ENCODE measurements at regions of chr10 and their contacts with region 1.

Region 1: GRCh38 chr10:73879296-73880173 is 5.2 kb upstream of the CAMK2G start:
- DNase-seq: peak; percentile 75 to 89
- ATAC-seq: peak; percentile 87 to 93
- H3K4me3 ChIP-seq: no peak overlapping the region
- H3K27ac ChIP-seq: peak overlapping the region in 1 of 2 experiments; percentile 65; a peak in 3 of 6 replicates
- H3K4me1 ChIP-seq: peaks cover 27% of the 10 kb centered on the region
- CTCF ChIP-seq: peak; percentile 88
- EP300 ChIP-seq: no peak
- POLR2A ChIP-seq: no peak
- RAD21 ChIP-seq: peak; percentile 80

Region 2: DNA sequence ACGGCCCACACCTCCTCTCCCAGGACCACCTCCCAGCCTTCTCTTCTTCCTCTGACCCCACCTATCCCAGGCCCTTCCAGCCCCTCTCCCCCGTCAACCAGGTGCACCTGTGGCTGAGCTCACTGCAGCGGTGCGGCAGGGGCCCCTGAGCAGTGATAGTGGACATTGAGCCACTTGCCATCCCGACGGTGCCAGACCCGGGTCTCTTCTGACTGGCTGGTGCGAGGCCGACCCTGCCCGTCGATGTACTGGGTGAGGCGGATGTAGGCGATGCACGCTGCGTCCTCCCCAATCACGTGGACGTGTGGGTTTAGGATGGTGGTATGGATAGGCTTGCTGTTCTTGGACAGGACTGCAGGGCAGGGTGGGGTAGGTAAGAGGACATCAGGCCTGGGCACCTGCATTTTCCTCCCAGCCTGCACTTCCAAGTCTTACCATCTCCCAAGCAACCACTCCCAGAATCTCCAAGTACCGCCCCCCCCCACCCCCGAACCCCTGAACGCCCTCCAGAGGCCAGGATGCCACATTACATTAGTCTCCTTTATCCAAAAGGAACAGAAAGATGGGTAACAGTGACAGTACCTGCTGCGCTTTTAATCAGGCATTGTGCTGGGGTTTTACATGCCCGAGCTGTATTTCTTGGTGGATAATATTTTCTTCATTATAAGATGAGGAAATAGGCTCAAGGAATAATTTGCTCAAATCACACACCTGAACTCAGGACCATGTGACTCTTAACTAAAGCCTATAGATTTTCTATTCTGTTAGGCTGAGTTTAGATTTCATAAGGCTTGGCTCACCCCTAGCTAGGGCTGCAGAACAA is 64.4 kb before region 1 on chr10:
- CTCF ChIA-PET with region 1: interaction called, 13 read pairs
- POLR2A ChIA-PET with region 1: no interaction called
- DNase-seq: peak; percentile 62 to 79
- ATAC-seq: no peak; a peak in 1 of 6 replicates
- H3K4me3 ChIP-seq: no peak overlapping the region
- H3K27ac ChIP-seq: no peak overlapping the region
- H3K4me1 ChIP-seq: peaks cover 5% of the 10 kb centered on the region; the same call in 2 of the 3 replicates
- CTCF ChIP-seq: peak; percentile 23; the same call in 1 of the 3 replicates
- EP300 ChIP-seq: no peak
- POLR2A ChIP-seq: no peak
- RAD21 ChIP-seq: no peak

Region 3: DNA sequence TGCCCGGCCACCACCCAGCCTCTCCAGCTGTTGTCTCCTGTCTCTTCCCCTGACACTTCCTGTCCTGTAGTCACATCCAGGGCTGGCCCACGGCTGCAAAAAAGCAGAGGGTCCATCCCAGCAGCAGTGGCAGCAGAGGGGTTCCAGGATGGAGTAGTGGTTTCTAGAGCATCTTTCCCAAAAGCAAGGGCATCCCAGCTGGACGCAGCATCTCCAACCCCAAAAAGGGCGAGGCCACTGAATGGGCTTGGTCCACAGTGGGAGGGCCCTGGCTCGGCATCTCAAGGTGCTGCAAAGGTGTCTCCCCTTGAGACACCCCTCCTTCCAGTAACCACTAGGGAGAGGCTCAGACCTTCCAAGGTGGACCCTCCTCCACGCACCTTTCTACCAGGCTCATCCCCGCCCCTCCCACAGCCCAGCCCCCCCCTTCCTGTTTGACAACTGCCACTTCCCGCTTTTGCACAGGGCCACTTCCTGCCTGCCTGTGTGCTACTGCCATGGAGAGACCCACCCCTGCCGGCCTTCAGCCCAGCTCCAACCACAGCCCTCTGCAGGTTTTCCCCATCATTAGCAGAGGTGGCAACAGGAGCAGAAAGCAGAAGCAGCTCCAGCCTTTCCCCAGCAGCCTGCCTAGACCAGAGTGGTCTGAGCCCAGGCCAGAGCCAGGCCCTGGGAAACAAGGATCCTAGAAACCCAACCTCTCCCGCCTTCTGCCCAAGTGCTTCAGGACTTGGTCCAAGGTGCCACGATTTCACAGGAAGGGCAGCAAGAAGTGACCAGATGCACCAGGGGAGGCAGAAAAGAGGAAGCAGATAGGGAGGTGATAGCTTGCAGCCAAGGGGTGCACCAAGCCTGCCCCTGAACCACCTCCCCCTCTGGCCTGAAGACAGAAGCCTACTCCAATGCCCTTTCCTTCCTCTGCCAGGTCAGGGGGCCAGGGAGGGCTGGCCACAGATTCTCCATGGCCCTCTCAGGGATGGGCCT is 13.8 kb before region 1 on chr10:
- CTCF ChIA-PET with region 1: interaction called, 565 read pairs
- POLR2A ChIA-PET with region 1: interaction called, 4 read pairs
- DNase-seq: no peak
- ATAC-seq: no peak
- H3K4me3 ChIP-seq: no peak overlapping the region
- H3K27ac ChIP-seq: no peak overlapping the region
- H3K4me1 ChIP-seq: no peaks in the 10 kb centered on the region
- CTCF ChIP-seq: no peak
- EP300 ChIP-seq: no peak
- POLR2A ChIP-seq: no peak
- RAD21 ChIP-seq: no peak

Region 4: GRCh38 chr10:73908853-73909538 is 29.5 kb after region 1 on chr10:
- CTCF ChIA-PET with region 1: interaction called, 162 read pairs
- POLR2A ChIA-PET with region 1: no interaction called
- DNase-seq: peak; percentile 81 to 93
- ATAC-seq: peak; percentile 51; a peak in 5 of 6 replicates
- H3K4me3 ChIP-seq: peak overlapping the region; percentile 60; the same call in 2 of the 3 replicates
- H3K27ac ChIP-seq: peak overlapping the region; percentile 91 to 96
- H3K4me1 ChIP-seq: peaks cover 79% of the 10 kb centered on the region
- CTCF ChIP-seq: no peak
- EP300 ChIP-seq: peak; percentile 55 to 74; a peak in 3 of 5 replicates
- POLR2A ChIP-seq: no peak
- RAD21 ChIP-seq: peak in 1 of 2 experiments; percentile 13; a peak in 1 of 5 replicates

Region 5: GRCh38 chr10:74096777-74097176 is 217.2 kb after region 1 on chr10:
- CTCF ChIA-PET with region 1: interaction called, 21 read pairs
- POLR2A ChIA-PET with region 1: no interaction called
- DNase-seq: no peak
- ATAC-seq: no peak
- H3K4me3 ChIP-seq: no peak overlapping the region
- H3K27ac ChIP-seq: no peak overlapping the region
- H3K4me1 ChIP-seq: peaks cover 9% of the 10 kb centered on the region; the same call in 2 of the 3 replicates
- CTCF ChIP-seq: no peak
- EP300 ChIP-seq: no peak
- POLR2A ChIP-seq: no peak
- RAD21 ChIP-seq: no peak

Region 6: DNA sequence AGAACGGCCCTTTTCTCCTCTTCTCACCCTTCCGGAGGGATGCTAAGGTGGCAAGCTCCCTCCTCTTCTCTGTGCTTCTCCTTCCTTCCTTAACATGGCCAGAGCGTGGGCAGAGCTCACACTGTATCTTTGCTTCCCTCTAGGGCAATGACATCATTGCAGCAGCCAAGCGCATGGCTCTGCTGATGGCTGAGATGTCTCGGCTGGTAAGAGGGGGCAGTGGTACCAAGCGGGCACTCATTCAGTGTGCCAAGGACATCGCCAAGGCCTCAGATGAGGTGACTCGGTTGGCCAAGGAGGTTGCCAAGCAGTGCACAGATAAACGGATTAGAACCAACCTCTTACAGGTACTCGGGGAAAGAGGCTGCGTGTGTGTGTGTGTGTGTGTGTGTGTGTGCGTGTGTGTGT is 234.5 kb after region 1 on chr10:
- CTCF ChIA-PET with region 1: no interaction called
- POLR2A ChIA-PET with region 1: no interaction called
- DNase-seq: no peak
- ATAC-seq: no peak
- H3K4me3 ChIP-seq: no peak overlapping the region
- H3K27ac ChIP-seq: no peak overlapping the region
- H3K4me1 ChIP-seq: peaks cover 27% of the 10 kb centered on the region
- CTCF ChIP-seq: no peak
- EP300 ChIP-seq: no peak
- POLR2A ChIP-seq: no peak
- RAD21 ChIP-seq: no peak